ENCODE measurements at regions of chr5 and their contacts with region 1.

Region 1: DNA sequence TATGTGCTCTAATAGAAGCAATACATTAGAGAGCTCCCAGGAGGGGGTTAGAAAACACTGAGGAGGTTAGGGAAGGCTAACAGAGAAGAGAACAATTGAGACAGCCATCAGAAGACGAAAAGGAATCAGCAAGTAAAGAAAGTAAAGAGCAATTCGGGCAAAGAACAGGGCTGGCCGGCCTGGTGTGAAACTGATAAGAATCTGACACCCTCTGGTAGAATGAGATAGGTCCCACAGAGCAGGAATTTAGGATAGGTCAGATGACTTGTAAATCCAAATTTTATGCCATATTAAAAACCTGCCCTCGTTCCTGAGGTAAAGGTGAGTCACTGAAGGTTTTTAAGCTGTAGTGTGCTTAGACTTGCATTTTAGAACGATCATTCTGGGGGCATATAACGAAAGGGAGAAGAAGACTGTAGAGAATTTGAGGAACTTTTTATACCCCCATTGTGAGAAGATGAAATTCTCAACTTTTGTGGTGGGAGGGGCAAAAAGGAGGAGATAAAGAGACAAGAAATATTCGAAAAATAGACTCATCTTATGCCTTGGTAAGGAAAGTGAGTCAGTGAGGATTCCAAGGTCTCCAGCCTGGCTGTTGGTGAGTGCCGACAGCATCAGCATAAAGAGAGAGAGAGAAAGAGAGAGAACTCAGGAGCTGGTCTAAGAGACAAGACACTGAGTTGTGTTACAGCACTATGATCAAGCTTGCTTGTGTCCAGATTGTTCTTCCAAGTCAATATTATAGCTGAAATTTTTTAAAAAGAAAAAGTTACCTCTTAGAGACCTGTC is 51.3 kb downstream of the TMEM167A start:
- DNase-seq: no peak
- H3K4me3 ChIP-seq: no peak overlapping the region
- H3K27ac ChIP-seq: no peak overlapping the region
- H3K4me1 ChIP-seq: no peaks in the 10 kb centered on the region
- H3K27me3 ChIP-seq: no peaks in the 10 kb centered on the region
- CTCF ChIP-seq: no peak

Region 2: GRCh38 chr5:83102364-83102980 is 76.6 kb after region 1 on chr5:
- CTCF ChIA-PET with region 1: no interaction called
- POLR2A ChIA-PET with region 1: no interaction called
- intact Hi-C with region 1: loop called (anchors 2 kb)
- DNase-seq: no peak
- H3K4me3 ChIP-seq: no peak overlapping the region
- H3K27ac ChIP-seq: no peak overlapping the region
- H3K4me1 ChIP-seq: peaks cover 12% of the 10 kb centered on the region
- H3K27me3 ChIP-seq: no peaks in the 10 kb centered on the region
- CTCF ChIP-seq: no peak